ENCODE measurements at regions of chr4 and their contacts with region 1.

Region 1: DNA sequence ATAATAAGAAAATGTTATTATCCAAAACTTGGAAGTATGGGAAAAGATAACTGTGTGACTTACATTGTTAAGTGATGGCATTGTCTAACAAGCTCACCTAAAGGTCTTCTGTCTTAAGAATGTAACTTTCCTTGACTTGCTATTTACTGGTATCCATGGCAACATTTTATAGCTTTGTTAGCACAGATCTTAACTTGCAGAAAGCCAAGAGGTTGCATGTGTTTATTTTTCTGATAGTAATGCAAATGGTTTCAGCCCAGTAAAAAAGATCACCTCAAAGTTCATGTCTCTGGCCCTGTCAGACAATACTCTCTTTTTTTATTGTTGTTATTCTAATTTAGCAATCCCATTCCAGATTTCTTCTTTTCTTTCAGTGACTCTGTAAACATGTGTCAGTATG is 425.3 kb downstream of the SPRY1 start:
- DNase-seq: no peak
- ATAC-seq: peak in 1 of 2 donors; percentile 54
- H3K4me3 ChIP-seq: no peak overlapping the region
- H3K27ac ChIP-seq: no peak overlapping the region
- H3K4me1 ChIP-seq: peaks cover 1% of the 10 kb centered on the region
- H3K27me3 ChIP-seq: no peaks in the 10 kb centered on the region

Region 2: DNA sequence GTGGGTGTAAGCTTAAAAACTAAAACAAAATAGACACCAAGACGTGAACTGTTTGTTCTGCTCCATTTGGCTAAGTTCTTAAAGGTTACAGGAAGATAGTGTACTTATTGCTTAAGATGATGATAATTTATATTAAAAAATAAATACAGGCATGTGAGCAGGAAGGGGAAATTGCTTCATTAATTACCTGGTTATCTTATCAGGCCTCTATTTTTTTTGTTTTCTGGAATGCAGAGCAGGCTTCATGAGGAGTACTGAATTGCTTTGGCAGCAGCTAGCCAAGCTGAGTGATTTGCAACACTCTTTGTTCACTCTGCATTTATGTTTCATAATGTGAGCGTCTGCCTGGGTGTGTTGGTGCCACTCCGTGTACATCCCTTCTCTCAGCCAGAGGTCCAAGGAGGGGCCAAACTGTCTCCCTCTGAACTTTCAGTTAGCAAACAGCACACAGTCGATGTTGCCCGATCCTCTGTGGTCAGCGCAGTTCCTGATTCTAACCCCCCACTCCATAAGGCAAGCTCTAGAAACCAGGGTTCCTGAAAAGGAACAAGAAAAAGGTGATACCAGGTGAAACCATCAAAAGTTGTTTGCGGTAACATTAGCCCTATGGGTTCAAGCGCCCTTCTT is 77.1 kb before region 1 on chr4:
- intact Hi-C with region 1: loop called in 1 of 4 experiments (anchors 5 kb)
- DNase-seq: peak; percentile 41 to 60 (median 50)
- ATAC-seq: peak; percentile 87
- H3K4me3 ChIP-seq: no peak overlapping the region
- H3K27ac ChIP-seq: peak overlapping the region; percentile 83
- H3K4me1 ChIP-seq: peaks cover 4% of the 10 kb centered on the region
- H3K27me3 ChIP-seq: no peaks in the 10 kb centered on the region

Region 3: GRCh38 chr4:124085561-124086180 is 263.8 kb after region 1 on chr4:
- intact Hi-C with region 1: no loop called
- DNase-seq: no peak
- ATAC-seq: no peak
- H3K4me3 ChIP-seq: no peak overlapping the region
- H3K27ac ChIP-seq: no peak overlapping the region
- H3K4me1 ChIP-seq: no peaks in the 10 kb centered on the region
- H3K27me3 ChIP-seq: no peaks in the 10 kb centered on the region

Measured in right cardiac atrium (tissue), 5 donors.